SK-N-SH (cell line): ENCODE measurements at regions of chr1 and their contacts with region 1.

Region 1: DNA sequence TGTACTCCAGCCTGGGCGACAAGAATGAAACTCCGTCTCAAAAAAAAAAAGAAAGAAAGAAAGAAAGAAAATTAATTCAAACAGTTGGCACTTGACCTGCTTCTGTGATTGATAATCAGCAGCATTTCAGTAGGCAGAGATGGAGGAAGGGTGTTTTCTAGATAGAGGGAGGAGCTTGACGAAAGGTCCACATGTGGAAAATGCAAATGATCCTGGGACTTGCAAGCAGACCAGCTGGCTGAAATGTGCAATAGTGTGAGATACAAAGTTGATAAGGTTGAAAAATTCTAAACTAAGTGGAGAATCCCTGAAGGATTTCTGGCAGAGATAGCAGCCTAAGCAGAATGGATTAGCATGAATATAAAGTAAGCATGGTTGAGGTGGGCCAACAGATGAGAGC is 4.2 kb downstream of the ELAPOR1 start:
- DNase-seq: no peak
- H3K4me3 ChIP-seq: no peak overlapping the region
- H3K27ac ChIP-seq: no peak overlapping the region
- H3K4me1 ChIP-seq: peaks cover 0 to 9% of the 10 kb centered on the region in 2 experiments; a peak in 1 of 4 replicates
- H3K27me3 ChIP-seq: peaks cover 16% of the 10 kb centered on the region
- CTCF ChIP-seq: no peak
- EP300 ChIP-seq: no peak
- RAD21 ChIP-seq: no peak

Region 2: DNA sequence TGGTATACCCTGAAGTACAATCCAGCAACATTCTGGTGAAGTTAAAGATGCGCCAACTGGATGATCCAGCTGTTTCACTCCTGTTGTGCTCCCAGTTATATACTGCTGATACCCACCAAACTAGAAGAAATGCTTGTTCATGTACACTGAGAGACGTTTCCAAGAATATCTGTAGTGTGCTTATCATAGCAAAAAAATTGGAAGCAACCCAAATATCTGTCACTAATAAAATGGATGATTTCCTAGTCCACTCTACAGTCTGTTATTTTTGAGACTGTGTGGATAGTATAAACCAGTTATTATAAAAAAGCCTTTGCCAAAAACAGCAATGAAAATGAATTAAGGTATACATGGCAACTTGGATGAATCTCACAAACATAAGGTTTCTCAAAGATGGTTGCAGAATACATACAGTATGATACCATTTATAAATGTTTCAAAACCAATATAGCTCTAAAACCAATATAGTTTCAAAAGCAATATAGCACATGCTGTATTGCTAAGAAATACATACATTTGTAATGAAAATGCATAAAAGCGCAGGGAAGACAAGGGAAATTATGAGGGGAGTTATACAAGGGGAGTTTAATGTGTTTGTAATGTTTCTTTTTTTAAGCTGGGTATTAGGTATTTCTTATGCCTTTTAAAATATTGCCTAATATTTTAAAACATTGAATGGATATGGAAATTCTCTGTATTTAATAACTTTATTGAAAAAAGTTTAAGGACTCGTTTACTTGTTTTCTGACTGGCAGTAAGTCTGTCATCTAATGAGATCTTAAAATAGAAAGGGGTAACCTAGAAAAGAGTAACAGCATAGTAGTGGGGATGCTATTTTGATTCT is 204.8 kb before region 1 on chr1:
- CTCF ChIA-PET with region 1: no interaction called
- POLR2A ChIA-PET with region 1: no interaction called
- DNase-seq: peak; percentile 29
- H3K4me3 ChIP-seq: no peak overlapping the region
- H3K27ac ChIP-seq: peak overlapping the region in 1 of 2 experiments; percentile 60; a peak in 3 of 4 replicates
- H3K4me1 ChIP-seq: peaks cover 0 to 7% of the 10 kb centered on the region in 2 experiments; a peak in 2 of 4 replicates
- H3K27me3 ChIP-seq: no peaks in the 10 kb centered on the region
- CTCF ChIP-seq: no peak
- EP300 ChIP-seq: no peak
- RAD21 ChIP-seq: no peak

Region 3: DNA sequence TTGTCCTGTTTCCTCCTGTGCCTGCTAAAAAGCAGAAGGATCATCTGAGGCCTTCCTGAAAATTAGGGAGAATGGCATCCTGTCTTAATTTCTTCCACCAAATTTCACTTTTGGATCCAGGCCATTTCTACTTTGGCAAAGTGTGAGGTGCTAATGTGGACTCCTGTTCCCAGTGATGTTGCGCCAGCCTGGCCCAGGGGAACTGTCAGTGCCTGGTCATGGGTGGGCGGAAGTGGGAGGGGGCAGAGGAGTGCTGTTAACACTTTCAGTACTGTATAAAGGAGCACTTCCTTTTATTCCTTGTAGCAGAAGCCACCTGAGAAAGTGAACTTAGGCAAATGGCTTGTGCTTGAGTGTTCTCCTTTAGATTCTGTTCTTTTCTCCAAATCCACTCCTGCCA is 15.7 kb after region 1 on chr1:
- CTCF ChIA-PET with region 1: interaction called, 16 read pairs
- POLR2A ChIA-PET with region 1: no interaction called
- DNase-seq: no peak
- H3K4me3 ChIP-seq: no peak overlapping the region
- H3K27ac ChIP-seq: no peak overlapping the region
- H3K4me1 ChIP-seq: peaks cover 0 to 8% of the 10 kb centered on the region in 2 experiments; a peak in 2 of 4 replicates
- H3K27me3 ChIP-seq: no peaks in the 10 kb centered on the region
- CTCF ChIP-seq: no peak
- EP300 ChIP-seq: no peak
- RAD21 ChIP-seq: no peak

Region 4: DNA sequence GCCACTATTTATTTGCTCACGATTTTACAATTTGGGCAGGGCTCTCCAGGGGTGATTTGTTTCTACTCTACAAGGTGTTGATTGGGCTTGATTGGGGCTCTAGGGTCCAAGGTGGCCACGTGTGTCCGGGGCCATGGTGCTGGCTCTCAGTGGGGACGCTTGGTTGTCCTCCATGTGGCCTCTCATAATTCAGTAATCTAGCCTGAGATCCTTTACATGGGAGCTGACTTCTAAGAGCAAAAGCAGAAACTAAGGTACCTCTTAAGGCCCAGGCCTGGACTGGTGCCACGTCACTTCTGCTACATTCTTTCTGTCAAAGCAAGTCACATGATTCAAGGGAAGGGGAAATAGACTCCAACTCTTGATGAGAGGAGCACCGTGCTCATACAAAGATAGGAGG is 172.9 kb after region 1 on chr1:
- CTCF ChIA-PET with region 1: no interaction called
- POLR2A ChIA-PET with region 1: no interaction called
- DNase-seq: no peak
- H3K4me3 ChIP-seq: no peak overlapping the region
- H3K27ac ChIP-seq: no peak overlapping the region
- H3K4me1 ChIP-seq: no peaks in the 10 kb centered on the region
- H3K27me3 ChIP-seq: no peaks in the 10 kb centered on the region
- CTCF ChIP-seq: no peak
- EP300 ChIP-seq: no peak
- RAD21 ChIP-seq: no peak